IMR-90 (cell line): ENCODE measurements at regions of chr11 and their contacts with region 1.

Region 1: GRCh38 chr11:132586801-132587200 is 945.5 kb downstream of the OPCML start:
- DNase-seq: peak; percentile 50
- ATAC-seq: peak; percentile 74
- H3K4me3 ChIP-seq: no peak overlapping the region
- H3K27ac ChIP-seq: no peak overlapping the region
- H3K4me1 ChIP-seq: peaks cover 3% of the 10 kb centered on the region; the same call in 1 of the 2 replicates
- H3K27me3 ChIP-seq: no peaks in the 10 kb centered on the region; the same call in 1 of the 2 replicates
- CTCF ChIP-seq: no peak
- POLR2A ChIP-seq: no peak
- RAD21 ChIP-seq: no peak

Region 2: GRCh38 chr11:132632641-132633124 is 45.9 kb after region 1 on chr11:
- CTCF ChIA-PET with region 1: no interaction called
- POLR2A ChIA-PET with region 1: no interaction called
- dilution Hi-C with region 1: no loop called
- in situ Hi-C with region 1: no loop called
- intact Hi-C with region 1: loop called (anchors 5 kb)
- DNase-seq: peak; percentile 99
- ATAC-seq: peak; percentile 93
- H3K4me3 ChIP-seq: no peak overlapping the region
- H3K27ac ChIP-seq: peak overlapping the region; percentile 62
- H3K4me1 ChIP-seq: peaks cover 11% of the 10 kb centered on the region
- H3K27me3 ChIP-seq: no peaks in the 10 kb centered on the region
- CTCF ChIP-seq: no peak
- POLR2A ChIP-seq: no peak
- RAD21 ChIP-seq: no peak; the same call in 1 of the 2 replicates